Activated CD4-positive, alpha-beta T cell treated with anti-CD3 and anti-CD28 coated beads for 36 hours (primary cell): ENCODE measurements at regions of chr20 and their contacts with region 1.

Region 1: GRCh38 chr20:31630187-31630790 is 7.4 kb upstream of the COX4I2 start:
- DNase-seq: no peak
- ATAC-seq: peak; percentile 49
- H3K4me3 Mint-ChIP-seq: no peak overlapping the region
- H3K27ac Mint-ChIP-seq: no peak overlapping the region
- H3K4me1 Mint-ChIP-seq: no peaks in the 10 kb centered on the region
- H3K27me3 Mint-ChIP-seq: no peaks in the 10 kb centered on the region

Region 2: GRCh38 chr20:31644701-31645100 is 14.4 kb after region 1 on chr20:
- CTCF ChIA-PET with region 1: interaction called, 12 read pairs
- POLR2A ChIA-PET with region 1: no interaction called
- intact Hi-C with region 1: no loop called
- DNase-seq: no peak
- ATAC-seq: no peak
- H3K4me3 Mint-ChIP-seq: no peak overlapping the region
- H3K27ac Mint-ChIP-seq: no peak overlapping the region
- H3K4me1 Mint-ChIP-seq: peaks cover 4% of the 10 kb centered on the region
- H3K27me3 Mint-ChIP-seq: peaks cover 7% of the 10 kb centered on the region